Activated CD8-positive, alpha-beta T cell treated with anti-CD3 and anti-CD28 coated beads for 36 hours (primary cell): ENCODE measurements at regions of chr12 and their contacts with region 1.

Region 1: GRCh38 chr12:64610149-64610678 is at the start of gene RASSF3:
- DNase-seq: peak; percentile 77
- ATAC-seq: peak; percentile 65
- H3K4me3 Mint-ChIP-seq: peak within 1 kb of the TSS; percentile 96
- H3K27ac Mint-ChIP-seq: peak within 1 kb of the TSS; percentile 96
- H3K4me1 Mint-ChIP-seq: peaks cover 34% of the 10 kb centered on the region
- H3K27me3 Mint-ChIP-seq: no peaks in the 10 kb centered on the region
- CTCF ChIP-seq: no peak
- total RNA-seq, gene RASSF3: 40.4 to 41.6 TPM

Region 2: GRCh38 chr12:64494998-64495729 is 115.0 kb before region 1 on chr12:
- CTCF ChIA-PET with region 1: no interaction called
- POLR2A ChIA-PET with region 1: no interaction called
- intact Hi-C with region 1: no loop called
- DNase-seq: no peak
- ATAC-seq: no peak
- H3K4me3 Mint-ChIP-seq: no peak overlapping the region
- H3K27ac Mint-ChIP-seq: no peak overlapping the region
- H3K4me1 Mint-ChIP-seq: peaks cover 12% of the 10 kb centered on the region
- H3K27me3 Mint-ChIP-seq: no peaks in the 10 kb centered on the region
- CTCF ChIP-seq: no peak

Region 3: GRCh38 chr12:64660237-64661018 is 50.2 kb after region 1 on chr12:
- CTCF ChIA-PET with region 1: interaction called, 4 read pairs
- POLR2A ChIA-PET with region 1: interaction called, 11 read pairs
- intact Hi-C with region 1: no loop called
- DNase-seq: no peak
- ATAC-seq: peak; percentile 19
- H3K4me3 Mint-ChIP-seq: no peak overlapping the region
- H3K27ac Mint-ChIP-seq: peak overlapping the region; percentile 87
- H3K4me1 Mint-ChIP-seq: peaks cover 77% of the 10 kb centered on the region
- H3K27me3 Mint-ChIP-seq: no peaks in the 10 kb centered on the region
- CTCF ChIP-seq: no peak

Region 4: DNA sequence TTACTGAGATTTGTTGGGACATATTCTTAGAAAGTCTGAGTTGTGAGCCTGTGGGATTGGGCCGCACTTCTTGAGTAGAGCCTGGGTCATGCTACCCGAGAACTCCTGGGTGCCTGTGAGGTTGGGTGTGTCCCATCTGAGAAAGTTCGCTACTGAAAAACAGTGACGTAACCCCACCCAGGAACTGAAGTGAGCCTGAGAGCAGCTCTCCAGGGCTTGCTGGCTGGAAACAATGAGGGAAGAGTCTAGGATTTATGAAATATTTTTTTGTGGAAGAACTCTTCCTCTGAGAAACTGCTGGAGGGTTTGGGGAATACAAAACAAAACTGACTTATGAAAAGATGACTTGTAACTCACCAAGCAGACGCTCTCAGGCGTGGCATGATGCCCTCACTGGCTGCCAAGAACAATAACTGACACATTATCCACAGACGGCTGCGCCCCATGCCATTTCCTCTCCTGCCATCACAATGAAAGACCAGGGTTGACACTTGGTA is 69.3 kb after region 1 on chr12:
- CTCF ChIA-PET with region 1: interaction called, 9 read pairs
- POLR2A ChIA-PET with region 1: interaction called, 13 read pairs
- intact Hi-C with region 1: no loop called
- DNase-seq: peak; percentile 83
- ATAC-seq: peak; percentile 68
- H3K4me3 Mint-ChIP-seq: peak overlapping the region; percentile 54
- H3K27ac Mint-ChIP-seq: peak overlapping the region; percentile 88
- H3K4me1 Mint-ChIP-seq: peaks cover 89% of the 10 kb centered on the region
- H3K27me3 Mint-ChIP-seq: no peaks in the 10 kb centered on the region
- CTCF ChIP-seq: no peak